Dendritic cell treated with granulocyte-macrophage colony-stimulating factor and Interleukin-4, amounts not matched to agents 40 ng/mL and 50 ng/mL, for 4 days (primary cell): ENCODE measurements at regions of chr6 and their contacts with region 1.

Region 1: GRCh38 chr6:116531675-116532570 is 13.6 kb downstream of the TRAPPC3L start:
- H3K4me3 Mint-ChIP-seq: no peak overlapping the region
- H3K27ac Mint-ChIP-seq: no peak overlapping the region
- H3K4me1 Mint-ChIP-seq: peaks cover 31% of the 10 kb centered on the region
- H3K27me3 Mint-ChIP-seq: no peaks in the 10 kb centered on the region

Region 2: DNA sequence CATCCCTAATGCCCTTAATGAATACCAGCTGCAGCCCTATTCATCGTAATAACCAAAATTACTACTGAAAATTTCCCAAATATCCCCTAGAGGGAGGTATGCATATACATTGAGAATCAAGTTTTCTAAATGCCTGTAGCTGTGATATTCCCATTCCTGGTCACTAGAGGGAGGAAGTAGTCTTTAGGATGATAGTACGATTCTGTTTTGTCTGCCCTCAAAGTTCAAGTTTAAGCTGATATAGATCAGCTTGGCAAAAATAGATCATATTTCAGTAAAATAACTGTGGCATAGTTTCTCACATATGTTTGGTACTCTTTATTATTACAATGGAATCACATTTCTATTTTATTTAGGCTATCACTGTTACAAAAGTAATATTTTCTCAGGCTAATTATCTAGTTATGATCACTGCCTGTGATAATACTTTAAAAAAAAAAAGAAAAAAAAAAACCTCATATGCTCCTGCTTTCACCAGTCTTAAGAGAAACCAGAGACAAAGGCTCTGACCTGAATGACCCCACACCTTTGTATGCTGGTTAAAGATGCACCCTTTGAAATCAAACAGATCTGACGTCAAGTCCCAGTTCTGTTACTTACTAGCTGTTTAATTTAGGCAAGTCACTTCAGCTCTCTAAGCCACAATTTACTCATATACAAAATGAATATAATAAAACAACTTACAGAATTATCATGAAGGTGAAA is 263.2 kb before region 1 on chr6:
- intact Hi-C with region 1: loop called (anchors 5 kb)
- H3K4me3 Mint-ChIP-seq: no peak overlapping the region
- H3K27ac Mint-ChIP-seq: no peak overlapping the region
- H3K4me1 Mint-ChIP-seq: no peaks in the 10 kb centered on the region
- H3K27me3 Mint-ChIP-seq: no peaks in the 10 kb centered on the region

Region 3: DNA sequence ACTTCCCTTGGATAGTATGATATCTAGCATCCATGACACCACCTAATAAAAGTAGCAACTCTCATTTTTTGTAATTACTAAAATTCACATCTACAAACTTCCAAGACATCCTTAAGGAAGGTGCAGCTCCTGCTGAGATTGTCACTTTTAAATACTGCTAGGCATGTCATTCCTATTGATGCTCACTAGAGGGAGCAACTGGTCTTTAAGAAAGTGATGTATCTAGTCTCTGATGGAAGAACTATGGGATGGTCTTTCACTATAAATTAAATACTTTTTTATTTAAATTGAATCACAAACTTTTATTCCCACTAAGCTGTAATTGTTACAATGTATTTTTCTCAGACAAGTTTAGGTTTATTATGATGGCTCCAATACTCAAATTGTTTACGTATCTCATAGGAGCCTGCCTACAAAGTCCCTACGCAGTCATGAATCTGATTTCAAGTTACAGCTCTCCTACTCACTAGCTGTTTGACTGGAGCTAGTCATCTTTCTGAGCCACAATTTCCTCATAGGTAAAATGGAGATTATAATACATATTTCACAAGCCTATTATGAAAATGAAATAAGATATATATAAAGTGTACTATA is 244.1 kb before region 1 on chr6:
- intact Hi-C with region 1: loop called (anchors 1 kb)
- H3K4me3 Mint-ChIP-seq: no peak overlapping the region
- H3K27ac Mint-ChIP-seq: no peak overlapping the region
- H3K4me1 Mint-ChIP-seq: no peaks in the 10 kb centered on the region
- H3K27me3 Mint-ChIP-seq: no peaks in the 10 kb centered on the region

Region 4: DNA sequence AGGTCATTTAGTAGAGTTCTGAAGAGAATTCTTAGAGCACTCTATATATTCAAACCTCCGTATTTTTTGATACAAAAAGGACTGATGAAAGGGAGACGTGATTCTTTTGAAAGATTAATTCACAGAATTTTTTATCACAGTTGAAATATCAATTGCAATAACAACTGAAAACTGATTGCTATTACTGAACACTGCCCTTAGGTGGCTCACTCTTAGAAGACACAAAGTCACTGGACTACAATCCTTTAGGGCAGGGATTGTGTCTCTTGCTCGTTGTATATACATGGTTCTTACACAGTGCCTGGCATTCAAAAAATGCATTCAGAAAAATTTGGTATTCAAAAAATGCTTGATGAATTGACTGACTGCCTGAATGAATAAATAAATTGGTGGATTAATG is 87.8 kb before region 1 on chr6:
- intact Hi-C with region 1: loop called (anchors 5 kb)
- H3K4me3 Mint-ChIP-seq: no peak overlapping the region
- H3K27ac Mint-ChIP-seq: peak overlapping the region; percentile 70
- H3K4me1 Mint-ChIP-seq: peaks cover 66% of the 10 kb centered on the region
- H3K27me3 Mint-ChIP-seq: no peaks in the 10 kb centered on the region